ENCODE measurements at regions of chr20 and their contacts with region 1.

Region 1: GRCh38 chr20:5788385-5788895 is 38.2 kb downstream of the SHLD1 start:
- DNase-seq: peak; percentile 82
- H3K4me3 ChIP-seq: no peak overlapping the region
- H3K27ac ChIP-seq: no peak overlapping the region
- H3K4me1 ChIP-seq: peaks cover 6% of the 10 kb centered on the region
- H3K27me3 ChIP-seq: no peaks in the 10 kb centered on the region
- CTCF ChIP-seq: peak; percentile 72 to 73
- POLR2A ChIP-seq: no peak

Region 2: DNA sequence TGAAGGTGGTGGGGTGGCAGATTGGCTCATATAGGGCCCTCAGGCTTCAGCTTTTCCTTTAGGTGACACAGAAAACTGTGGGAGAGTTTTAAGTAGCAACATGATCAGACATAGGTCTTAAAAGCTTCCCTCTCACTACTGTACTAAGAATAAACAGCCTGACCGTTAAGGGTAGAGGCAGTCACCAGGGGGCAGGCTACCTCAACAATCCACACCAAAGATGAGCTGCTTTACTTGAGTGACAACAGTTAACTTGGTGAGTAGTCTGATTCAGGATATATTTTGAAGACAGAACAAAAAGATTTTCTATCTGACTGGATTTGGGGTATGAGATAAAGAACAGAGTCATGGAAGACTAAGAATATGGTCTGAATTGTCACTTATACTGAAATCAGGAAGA is 231.3 kb before region 1 on chr20:
- CTCF ChIA-PET with region 1: interaction called, 215 read pairs
- POLR2A ChIA-PET with region 1: interaction called, 3 read pairs
- dilution Hi-C with region 1: no loop called
- intact Hi-C with region 1: loop called (anchors 1 kb)
- DNase-seq: peak; percentile 63
- H3K4me3 ChIP-seq: no peak overlapping the region
- H3K27ac ChIP-seq: no peak overlapping the region
- H3K4me1 ChIP-seq: no peaks in the 10 kb centered on the region
- H3K27me3 ChIP-seq: no peaks in the 10 kb centered on the region
- CTCF ChIP-seq: peak; percentile 53 to 61
- POLR2A ChIP-seq: no peak

Region 3: GRCh38 chr20:5592823-5593739 is 195.4 kb before region 1 on chr20:
- CTCF ChIA-PET with region 1: interaction called, 12 read pairs
- POLR2A ChIA-PET with region 1: no interaction called
- dilution Hi-C with region 1: no loop called
- intact Hi-C with region 1: no loop called
- DNase-seq: no peak
- H3K4me3 ChIP-seq: no peak overlapping the region
- H3K27ac ChIP-seq: no peak overlapping the region
- H3K4me1 ChIP-seq: no peaks in the 10 kb centered on the region
- H3K27me3 ChIP-seq: no peaks in the 10 kb centered on the region
- CTCF ChIP-seq: no peak
- POLR2A ChIP-seq: no peak

Region 4: GRCh38 chr20:5714261-5715041 is 74.0 kb before region 1 on chr20:
- CTCF ChIA-PET with region 1: interaction called, 13 read pairs
- POLR2A ChIA-PET with region 1: no interaction called
- dilution Hi-C with region 1: no loop called
- intact Hi-C with region 1: no loop called
- DNase-seq: peak; percentile 77
- H3K4me3 ChIP-seq: no peak overlapping the region
- H3K27ac ChIP-seq: no peak overlapping the region
- H3K4me1 ChIP-seq: peaks cover 10% of the 10 kb centered on the region
- H3K27me3 ChIP-seq: peaks cover 14% of the 10 kb centered on the region in 2 experiments
- CTCF ChIP-seq: no peak
- POLR2A ChIP-seq: no peak

Region 5: GRCh38 chr20:6008254-6008653 is 219.8 kb after region 1 on chr20:
- CTCF ChIA-PET with region 1: interaction called, 7 read pairs
- POLR2A ChIA-PET with region 1: no interaction called
- dilution Hi-C with region 1: no loop called
- intact Hi-C with region 1: loop called (anchors 1 kb)
- DNase-seq: peak; percentile 74
- H3K4me3 ChIP-seq: peak overlapping the region in 1 of 3 experiments; percentile 14
- H3K27ac ChIP-seq: no peak overlapping the region
- H3K4me1 ChIP-seq: peaks cover 23% of the 10 kb centered on the region
- H3K27me3 ChIP-seq: no peaks in the 10 kb centered on the region
- CTCF ChIP-seq: no peak
- POLR2A ChIP-seq: no peak

Region 6: DNA sequence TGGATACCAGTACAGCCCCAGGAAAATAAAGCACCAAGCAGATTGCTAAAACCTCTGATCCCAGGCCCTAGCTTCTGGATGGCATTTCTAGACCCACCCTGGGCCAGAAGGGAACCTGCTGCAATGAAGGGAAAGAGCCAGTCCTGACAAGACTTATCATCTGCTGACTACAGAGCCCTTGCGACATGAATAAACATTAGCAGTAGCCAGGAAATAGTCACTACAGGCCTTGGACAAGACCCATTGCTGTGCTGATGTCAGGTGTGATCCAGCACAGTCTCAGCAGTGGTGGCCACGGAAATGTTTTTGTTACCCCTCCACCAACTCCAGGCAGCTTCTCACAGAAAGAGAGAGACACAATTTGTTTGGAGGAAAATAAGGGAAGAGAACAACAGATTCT is 1752.5 kb after region 1 on chr20:
- CTCF ChIA-PET with region 1: no interaction called
- POLR2A ChIA-PET with region 1: no interaction called
- dilution Hi-C with region 1: no loop called
- intact Hi-C with region 1: no loop called
- DNase-seq: no peak
- H3K4me3 ChIP-seq: no peak overlapping the region
- H3K27ac ChIP-seq: no peak overlapping the region
- H3K4me1 ChIP-seq: no peaks in the 10 kb centered on the region
- H3K27me3 ChIP-seq: no peaks in the 10 kb centered on the region
- CTCF ChIP-seq: no peak
- POLR2A ChIP-seq: no peak